ENCODE measurements at regions of chr2 and their contacts with region 1.

Region 1: DNA sequence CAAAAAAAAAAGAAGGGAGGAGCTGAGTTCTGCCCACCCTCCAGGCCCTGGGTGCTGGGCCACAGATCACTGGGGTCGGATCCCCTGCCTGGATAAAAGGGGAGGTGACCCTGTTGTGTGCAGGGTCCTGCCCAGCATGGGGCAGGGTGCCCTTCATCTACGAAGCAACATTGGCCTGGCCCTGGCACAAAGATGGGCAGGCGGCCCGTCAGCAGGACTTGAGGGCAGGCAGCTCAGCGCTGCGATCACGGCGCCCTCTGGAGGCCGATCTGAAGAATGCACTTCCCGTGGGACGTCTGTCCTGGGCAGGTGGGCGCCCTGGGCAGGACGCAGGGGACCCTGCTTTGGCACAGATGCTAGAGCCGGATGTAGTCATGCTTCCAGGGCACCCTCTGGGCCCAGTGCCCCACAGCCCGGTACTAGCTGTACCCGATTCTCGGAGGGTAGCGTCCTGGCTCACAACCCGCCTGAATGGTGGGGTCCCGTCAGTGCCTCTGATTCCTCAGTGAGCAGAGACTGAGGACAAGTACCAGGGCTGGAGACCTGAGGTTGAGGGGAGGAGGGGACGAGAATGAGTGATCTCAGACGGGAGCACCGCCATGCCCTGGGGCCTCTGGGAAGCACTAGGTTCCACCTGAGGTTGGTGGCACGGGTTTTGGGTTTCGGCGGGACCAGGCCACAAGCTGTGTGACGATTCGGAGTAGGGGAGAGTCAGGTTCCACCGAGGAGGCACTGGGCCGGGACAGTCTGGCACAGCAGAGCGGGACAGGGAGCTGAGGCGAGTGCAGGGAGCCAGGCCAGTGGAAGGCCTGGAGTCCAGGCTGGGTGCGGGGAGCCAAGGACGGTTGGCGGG is 18.0 kb downstream of the ARID5A start:
- DNase-seq: peak; percentile 73
- ATAC-seq: peak; percentile 77
- H3K4me3 Mint-ChIP-seq: no peak overlapping the region
- H3K27ac Mint-ChIP-seq: peak overlapping the region; percentile 43
- H3K4me1 Mint-ChIP-seq: peaks cover 25% of the 10 kb centered on the region
- H3K27me3 Mint-ChIP-seq: no peaks in the 10 kb centered on the region

Region 2: DNA sequence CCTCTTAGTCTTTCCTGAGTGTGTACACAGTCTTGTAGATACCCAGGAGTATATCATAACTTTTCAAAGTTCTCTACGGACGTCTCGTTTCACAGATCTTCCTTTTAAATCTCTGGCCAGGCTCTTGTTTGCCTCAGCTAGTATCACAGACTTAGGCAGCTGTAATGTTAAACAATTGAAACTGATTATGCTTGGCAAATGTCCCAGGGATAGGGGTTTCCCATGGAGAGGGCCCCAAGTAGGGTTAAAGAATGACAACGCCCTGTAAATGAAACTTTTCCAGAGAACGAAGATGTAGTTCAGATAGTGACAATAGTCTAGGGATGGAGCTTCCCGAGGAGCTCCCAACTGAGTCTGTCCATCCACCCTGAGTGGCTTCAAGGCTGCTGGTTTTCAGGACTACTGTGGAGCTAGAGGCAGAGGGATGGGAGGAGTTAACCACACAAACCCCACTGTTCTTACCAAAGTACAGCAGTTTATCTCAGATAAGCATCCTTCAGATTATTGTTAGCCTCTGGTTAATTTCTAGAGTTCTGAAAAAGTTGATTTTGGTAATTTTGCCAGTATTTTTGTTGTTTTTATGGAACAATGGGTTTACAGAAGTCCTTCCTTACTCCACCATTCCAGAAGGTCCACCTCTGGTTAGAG is 58.4 kb before region 1 on chr2:
- CTCF ChIA-PET with region 1: interaction called, 11 read pairs
- POLR2A ChIA-PET with region 1: no interaction called
- DNase-seq: no peak
- ATAC-seq: no peak
- H3K4me3 Mint-ChIP-seq: no peak overlapping the region
- H3K27ac Mint-ChIP-seq: peak overlapping the region; percentile 10
- H3K4me1 Mint-ChIP-seq: peaks cover 20% of the 10 kb centered on the region
- H3K27me3 Mint-ChIP-seq: no peaks in the 10 kb centered on the region

Region 3: GRCh38 chr2:96509114-96509846 is 45.2 kb before region 1 on chr2:
- CTCF ChIA-PET with region 1: interaction called, 30 read pairs
- POLR2A ChIA-PET with region 1: interaction called, 3 read pairs
- DNase-seq: peak; percentile 69
- ATAC-seq: peak; percentile 36
- H3K4me3 Mint-ChIP-seq: no peak overlapping the region
- H3K27ac Mint-ChIP-seq: peak overlapping the region; percentile 7
- H3K4me1 Mint-ChIP-seq: peaks cover 15% of the 10 kb centered on the region
- H3K27me3 Mint-ChIP-seq: peaks cover 15% of the 10 kb centered on the region

Region 4: GRCh38 chr2:96527286-96528005 is 27.1 kb before region 1 on chr2:
- CTCF ChIA-PET with region 1: interaction called, 27 read pairs
- POLR2A ChIA-PET with region 1: interaction called, 5 read pairs
- DNase-seq: peak; percentile 77
- ATAC-seq: peak; percentile 30
- H3K4me3 Mint-ChIP-seq: peak overlapping the region; percentile 69
- H3K27ac Mint-ChIP-seq: peak overlapping the region; percentile 78
- H3K4me1 Mint-ChIP-seq: peaks cover 90% of the 10 kb centered on the region
- H3K27me3 Mint-ChIP-seq: no peaks in the 10 kb centered on the region

Region 5: DNA sequence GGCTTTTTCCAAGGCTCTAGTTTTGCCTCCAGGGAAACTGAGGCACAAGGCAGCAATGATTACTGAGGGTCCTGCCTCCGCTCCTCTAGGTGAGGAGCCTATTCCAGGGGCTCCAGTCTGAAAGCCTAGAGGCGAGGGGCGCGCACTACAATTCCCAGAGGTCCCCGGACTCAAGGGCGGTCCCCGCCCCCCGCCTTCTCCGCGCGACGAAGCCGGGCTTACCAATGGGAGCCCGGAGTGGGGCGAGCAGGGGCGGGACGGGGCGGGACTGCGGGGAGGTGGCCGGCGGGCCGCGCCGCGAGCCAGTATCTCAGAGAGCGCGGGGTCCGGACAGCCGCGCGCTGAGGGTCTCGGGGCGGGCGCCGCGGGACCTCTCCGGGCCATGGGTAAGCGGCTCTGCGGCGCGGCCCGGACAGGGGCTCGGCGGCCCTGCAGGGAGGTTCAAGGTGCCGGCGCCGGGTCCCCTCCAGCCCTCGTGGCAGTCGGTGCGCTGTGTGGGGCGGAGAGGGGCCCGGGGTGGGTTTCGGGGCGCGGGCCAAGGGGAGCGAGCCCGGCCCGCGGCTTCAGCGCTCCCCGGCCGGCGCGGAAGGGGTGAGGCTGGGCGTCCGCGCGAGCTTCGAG is 18.0 kb before region 1 on chr2 and contains the start of gene ARID5A:
- CTCF ChIA-PET with region 1: interaction called, 90 read pairs
- POLR2A ChIA-PET with region 1: interaction called, 22 read pairs
- DNase-seq: peak; percentile 95
- ATAC-seq: peak; percentile 65
- H3K4me3 Mint-ChIP-seq: peak within 1 kb of the TSS; percentile 83
- H3K27ac Mint-ChIP-seq: peak within 1 kb of the TSS; percentile 82
- H3K4me1 Mint-ChIP-seq: peaks cover 63% of the 10 kb centered on the region
- H3K27me3 Mint-ChIP-seq: no peaks in the 10 kb centered on the region
- total RNA-seq, gene ARID5A: 37.7 to 40.1 TPM

Region 6: GRCh38 chr2:96565111-96565510 is 10.6 kb after region 1 on chr2:
- CTCF ChIA-PET with region 1: interaction called, 14 read pairs
- POLR2A ChIA-PET with region 1: no interaction called
- DNase-seq: no peak
- ATAC-seq: no peak
- H3K4me3 Mint-ChIP-seq: no peak overlapping the region
- H3K27ac Mint-ChIP-seq: no peak overlapping the region
- H3K4me1 Mint-ChIP-seq: no peaks in the 10 kb centered on the region
- H3K27me3 Mint-ChIP-seq: no peaks in the 10 kb centered on the region

Region 7: DNA sequence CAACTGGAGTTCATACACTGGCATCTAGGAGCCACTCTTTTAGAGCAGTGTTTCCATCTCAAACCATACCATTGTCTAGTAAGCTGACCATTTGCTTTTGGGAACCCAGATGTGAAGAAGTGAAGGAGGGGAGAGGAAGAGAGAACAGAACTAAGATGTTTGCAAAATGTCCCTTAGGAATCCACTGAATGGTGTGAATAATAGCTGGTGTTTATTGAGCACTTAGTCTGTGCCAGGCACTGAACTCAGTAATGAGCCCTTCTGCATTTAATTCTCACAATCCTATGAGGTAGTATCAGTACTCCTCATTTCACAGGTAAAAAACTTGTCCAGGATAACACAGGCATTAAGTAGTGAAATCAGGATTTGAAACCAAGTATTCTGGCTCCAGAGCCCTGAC is 161.9 kb after region 1 on chr2:
- CTCF ChIA-PET with region 1: no interaction called
- POLR2A ChIA-PET with region 1: no interaction called
- DNase-seq: no peak
- ATAC-seq: no peak
- H3K4me3 Mint-ChIP-seq: no peak overlapping the region
- H3K27ac Mint-ChIP-seq: no peak overlapping the region
- H3K4me1 Mint-ChIP-seq: no peaks in the 10 kb centered on the region
- H3K27me3 Mint-ChIP-seq: no peaks in the 10 kb centered on the region

Region 8: GRCh38 chr2:96816128-96816835 is 261.8 kb after region 1 on chr2 and contains the start of gene CNNM3:
- CTCF ChIA-PET with region 1: no interaction called
- POLR2A ChIA-PET with region 1: no interaction called
- DNase-seq: peak; percentile 96
- ATAC-seq: peak; percentile 95
- H3K4me3 Mint-ChIP-seq: peak within 1 kb of the TSS; percentile 89
- H3K27ac Mint-ChIP-seq: peak within 1 kb of the TSS; percentile 71
- H3K4me1 Mint-ChIP-seq: peaks cover 53% of the 10 kb centered on the region
- H3K27me3 Mint-ChIP-seq: no peaks in the 10 kb centered on the region
- total RNA-seq, gene CNNM3: 28.1 to 29.9 TPM